Right cardiac atrium (tissue), 5 donors: ENCODE measurements at regions of chr18 and their contacts with region 1.

Region 1: GRCh38 chr18:48445540-48445939 is 36.4 kb upstream of the ZBTB7C start:
- DNase-seq: peak; percentile 73 to 89 (median 84)
- ATAC-seq: peak; percentile 51 to 69
- H3K4me3 ChIP-seq: no peak overlapping the region
- H3K27ac ChIP-seq: no peak overlapping the region
- H3K4me1 ChIP-seq: no peaks in the 10 kb centered on the region
- H3K27me3 ChIP-seq: no peaks in the 10 kb centered on the region

Region 2: GRCh38 chr18:48030616-48031480 is 414.7 kb before region 1 on chr18:
- intact Hi-C with region 1: loop called (anchors 2 to 5 kb)
- DNase-seq: peak in 1 of 3 donors; percentile 49
- ATAC-seq: peak; percentile 76 to 78
- H3K4me3 ChIP-seq: no peak overlapping the region
- H3K27ac ChIP-seq: no peak overlapping the region
- H3K4me1 ChIP-seq: peaks cover 7% of the 10 kb centered on the region
- H3K27me3 ChIP-seq: no peaks in the 10 kb centered on the region

Region 3: DNA sequence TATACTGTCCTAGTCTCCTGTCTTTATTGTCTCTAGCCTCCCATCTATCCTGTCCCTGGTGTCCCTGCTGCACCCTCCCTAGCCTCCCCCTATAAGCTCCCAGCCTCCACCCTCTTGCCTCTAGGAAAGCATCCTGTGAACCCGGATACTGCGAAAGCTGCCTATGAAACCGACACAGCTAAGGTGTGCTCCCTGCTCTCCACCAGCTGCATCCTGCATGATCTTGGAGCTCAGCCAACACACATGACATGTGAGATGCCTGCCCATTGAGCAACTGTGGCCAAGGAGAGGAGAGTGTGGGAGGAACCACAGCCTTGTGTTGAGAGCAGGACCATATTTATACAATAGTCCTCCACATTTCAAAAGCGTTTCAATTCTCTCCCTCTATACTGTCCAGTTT is 223.4 kb before region 1 on chr18:
- intact Hi-C with region 1: loop called in 1 of 4 experiments (anchors 10 kb)
- DNase-seq: peak in 1 of 3 donors; percentile 40
- ATAC-seq: peak; percentile 64 to 66
- H3K4me3 ChIP-seq: no peak overlapping the region
- H3K27ac ChIP-seq: no peak overlapping the region
- H3K4me1 ChIP-seq: peaks cover 3% of the 10 kb centered on the region
- H3K27me3 ChIP-seq: no peaks in the 10 kb centered on the region

Region 4: GRCh38 chr18:48238206-48238605 is 207.3 kb before region 1 on chr18:
- intact Hi-C with region 1: no loop called
- DNase-seq: no peak
- ATAC-seq: no peak
- H3K4me3 ChIP-seq: no peak overlapping the region
- H3K27ac ChIP-seq: no peak overlapping the region
- H3K4me1 ChIP-seq: no peaks in the 10 kb centered on the region
- H3K27me3 ChIP-seq: no peaks in the 10 kb centered on the region

Region 5: DNA sequence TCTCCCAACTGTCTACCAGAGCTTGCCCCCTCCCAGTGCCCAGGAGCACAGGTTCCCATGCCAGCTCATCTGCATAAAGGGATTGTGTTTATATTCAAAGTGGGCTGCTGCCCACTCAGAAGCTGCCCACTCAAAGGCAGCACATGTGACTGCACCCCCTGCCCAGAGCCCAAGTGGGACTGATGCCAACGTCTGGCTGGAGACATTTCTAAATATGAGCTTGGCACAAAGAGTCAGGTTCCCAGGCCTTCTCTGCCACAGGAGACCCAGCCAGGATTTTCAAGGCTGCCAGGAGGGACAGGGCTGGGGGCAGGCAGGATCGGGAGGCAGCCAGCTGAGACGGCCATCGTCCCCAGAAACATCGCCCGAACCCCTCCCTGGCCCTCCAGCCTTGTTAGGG is 103.4 kb before region 1 on chr18:
- intact Hi-C with region 1: loop called in 1 of 4 experiments (anchors 5 kb)
- DNase-seq: peak in 1 of 3 donors; percentile 69
- ATAC-seq: peak; percentile 12 to 37
- H3K4me3 ChIP-seq: no peak overlapping the region
- H3K27ac ChIP-seq: peak overlapping the region; percentile 60
- H3K4me1 ChIP-seq: peaks cover 2% of the 10 kb centered on the region
- H3K27me3 ChIP-seq: no peaks in the 10 kb centered on the region